Endothelial cell of umbilical vein (primary cell): ENCODE measurements at regions of chr19 and their contacts with region 1.

Region 1: GRCh38 chr19:33438007-33438671 is 64.6 kb downstream of the CEBPG start:
- DNase-seq: no peak
- H3K4me3 ChIP-seq: no peak overlapping the region
- H3K27ac ChIP-seq: no peak overlapping the region
- H3K4me1 ChIP-seq: peaks cover 6% of the 10 kb centered on the region
- H3K27me3 ChIP-seq: no peaks in the 10 kb centered on the region
- CTCF ChIP-seq: peak; percentile 15 to 41
- POLR2A ChIP-seq: no peak

Region 2: DNA sequence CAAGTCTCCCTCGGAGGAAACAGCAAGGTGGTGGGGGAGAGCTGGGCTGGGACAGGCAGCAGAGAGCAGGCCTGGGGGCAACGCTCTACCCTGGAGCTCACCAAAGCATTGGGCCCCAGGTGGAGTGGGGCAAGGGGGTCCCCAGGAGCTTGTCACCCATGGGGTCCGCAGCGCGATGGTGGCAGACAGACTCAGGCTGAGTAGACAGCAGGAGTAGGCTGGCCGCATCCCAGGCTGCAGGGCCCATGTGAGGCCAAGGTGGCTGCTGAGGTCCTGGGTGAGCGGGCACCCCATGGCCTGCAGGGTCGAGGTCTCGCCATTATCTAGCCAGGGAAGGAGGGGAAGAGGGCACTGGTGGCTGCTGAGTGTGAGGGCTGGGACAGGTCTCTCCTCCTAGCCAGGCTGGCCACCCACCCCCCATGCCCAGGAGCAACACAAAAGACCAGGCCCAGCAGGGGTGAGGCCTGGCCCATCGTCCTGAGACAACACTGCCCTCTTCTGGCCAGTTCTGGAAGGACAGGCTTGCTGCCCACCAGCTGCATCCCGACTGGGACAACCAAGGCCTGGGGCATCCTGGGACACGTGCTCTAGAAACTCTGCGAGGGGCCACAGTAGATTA is 31.5 kb before region 1 on chr19:
- CTCF ChIA-PET with region 1: no interaction called
- POLR2A ChIA-PET with region 1: no interaction called
- dilution Hi-C with region 1: no loop called
- intact Hi-C with region 1: no loop called
- DNase-seq: peak; percentile 57
- H3K4me3 ChIP-seq: no peak overlapping the region
- H3K27ac ChIP-seq: no peak overlapping the region
- H3K4me1 ChIP-seq: no peaks in the 10 kb centered on the region
- H3K27me3 ChIP-seq: no peaks in the 10 kb centered on the region
- CTCF ChIP-seq: peak; percentile 85 to 89
- POLR2A ChIP-seq: no peak

Region 3: GRCh38 chr19:33456076-33456844 is 18.1 kb after region 1 on chr19:
- CTCF ChIA-PET with region 1: no interaction called
- POLR2A ChIA-PET with region 1: no interaction called
- dilution Hi-C with region 1: no loop called
- intact Hi-C with region 1: no loop called
- DNase-seq: no peak
- H3K4me3 ChIP-seq: no peak overlapping the region
- H3K27ac ChIP-seq: no peak overlapping the region
- H3K4me1 ChIP-seq: no peaks in the 10 kb centered on the region
- H3K27me3 ChIP-seq: no peaks in the 10 kb centered on the region
- CTCF ChIP-seq: no peak
- POLR2A ChIP-seq: no peak

Region 4: DNA sequence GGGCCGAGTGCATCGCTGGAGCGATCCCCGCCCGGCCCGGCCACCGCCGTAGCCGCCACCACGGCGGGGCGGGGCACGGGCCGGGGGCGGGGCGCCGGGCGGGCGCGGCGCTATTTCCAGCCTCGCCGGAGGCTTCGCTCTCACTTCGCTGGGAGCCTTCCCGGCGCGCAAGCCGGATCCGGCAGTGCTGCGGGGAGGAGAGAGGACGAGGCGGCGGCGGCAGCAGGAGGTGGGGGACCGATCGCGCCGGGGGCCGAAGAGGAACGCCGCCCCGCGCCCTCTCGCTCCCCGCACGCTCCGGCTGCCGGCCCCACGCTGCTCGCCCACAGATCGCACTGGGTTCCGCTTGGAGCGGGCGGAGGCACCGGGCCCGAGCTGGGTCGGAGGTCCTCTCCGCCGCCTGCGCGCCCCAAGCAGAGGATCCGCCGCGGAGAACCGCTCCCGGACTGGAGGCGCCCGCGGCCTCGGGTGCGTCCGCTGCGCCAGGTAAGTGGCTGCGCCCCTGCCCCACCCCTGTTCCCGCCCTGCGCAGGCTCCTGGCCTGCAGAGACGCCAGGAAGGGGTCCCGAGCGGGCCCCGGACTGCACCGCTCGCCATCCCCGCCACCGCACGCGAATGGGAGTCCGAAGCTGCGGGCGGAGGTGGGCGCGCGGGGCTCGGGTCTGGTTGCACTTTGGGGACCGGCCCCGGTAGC is 183.8 kb after region 1 on chr19 and contains the start of gene CHST8:
- CTCF ChIA-PET with region 1: no interaction called
- POLR2A ChIA-PET with region 1: no interaction called
- dilution Hi-C with region 1: no loop called
- intact Hi-C with region 1: loop called (anchors 5 kb)
- DNase-seq: peak; percentile 11
- H3K4me3 ChIP-seq: peak within 1 kb of the TSS in 1 of 3 experiments; percentile 28
- H3K27ac ChIP-seq: no peak within 1 kb of the TSS
- H3K4me1 ChIP-seq: no peaks in the 10 kb centered on the region
- H3K27me3 ChIP-seq: peaks cover 34 to 44% of the 10 kb centered on the region in 2 experiments
- CTCF ChIP-seq: no peak
- POLR2A ChIP-seq: peak; percentile 35
- total RNA-seq, gene CHST8: not detected in 2 replicates